ENCODE measurements at regions of chr6 and their contacts with region 1.

Region 1: GRCh38 chr6:11366183-11366933 is 133.9 kb upstream of the NEDD9 start:
- DNase-seq: peak; percentile 86
- H3K4me3 Mint-ChIP-seq: peak overlapping the region; percentile 62
- H3K27ac Mint-ChIP-seq: peak overlapping the region; percentile 86
- H3K4me1 Mint-ChIP-seq: peaks cover 78% of the 10 kb centered on the region
- H3K27me3 Mint-ChIP-seq: no peaks in the 10 kb centered on the region

Region 2: DNA sequence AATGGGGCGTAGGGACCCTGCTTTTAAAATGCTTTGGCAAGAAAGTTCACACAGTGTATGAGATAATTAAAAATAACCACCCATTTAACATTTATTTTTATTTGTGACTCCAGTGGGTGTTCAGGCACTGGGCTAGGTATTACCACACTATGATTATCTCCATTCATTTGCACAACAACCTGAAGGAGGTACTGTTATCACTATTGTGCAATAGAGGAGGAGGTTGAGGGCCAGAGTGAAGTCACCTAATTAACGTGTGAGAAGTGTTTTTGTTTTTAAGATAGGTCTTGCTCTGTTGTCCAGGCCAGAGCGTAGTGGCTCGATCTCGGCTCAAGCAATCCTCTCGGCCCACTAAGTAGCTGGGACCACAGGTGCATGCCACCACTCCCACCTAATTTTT is 557.3 kb before region 1 on chr6:
- intact Hi-C with region 1: no loop called
- DNase-seq: no peak
- H3K4me3 Mint-ChIP-seq: no peak overlapping the region
- H3K27ac Mint-ChIP-seq: no peak overlapping the region
- H3K4me1 Mint-ChIP-seq: no peaks in the 10 kb centered on the region
- H3K27me3 Mint-ChIP-seq: no peaks in the 10 kb centered on the region

Region 3: DNA sequence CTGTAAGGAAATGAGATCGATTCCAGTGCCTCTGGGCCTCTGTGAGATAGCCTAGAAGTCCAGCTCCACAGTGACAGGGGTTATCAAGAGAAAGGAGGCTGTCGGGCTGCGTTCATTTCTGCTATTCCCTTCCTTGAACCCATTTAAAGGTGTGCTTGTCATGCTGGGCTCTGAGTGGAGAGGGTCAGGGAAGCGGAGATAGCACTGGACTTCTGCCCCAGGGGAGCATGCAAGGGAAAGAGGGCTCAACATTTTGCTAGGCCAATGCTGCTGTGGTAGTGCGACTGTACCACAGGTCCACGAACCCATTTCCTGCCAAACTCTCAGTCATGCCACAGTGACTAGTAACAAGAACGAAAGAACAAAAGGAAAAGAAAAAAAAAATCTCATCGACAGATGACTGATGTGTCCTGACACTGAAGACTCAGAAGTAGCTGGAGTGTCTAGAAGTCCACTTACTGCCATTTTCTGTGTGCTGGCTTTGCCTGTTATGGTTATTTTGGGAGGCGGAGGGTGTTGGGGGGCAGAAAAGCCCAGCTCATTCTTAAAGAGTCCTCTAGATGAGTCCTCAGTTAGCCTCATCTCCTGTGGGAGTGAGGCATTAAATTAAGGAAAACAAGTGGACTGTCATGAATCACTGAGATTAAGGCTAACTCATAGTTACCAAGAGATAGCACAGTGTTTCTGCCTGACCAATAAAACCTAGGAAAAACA is 141.9 kb before region 1 on chr6:
- intact Hi-C with region 1: loop called (anchors 1 kb)
- DNase-seq: peak; percentile 87
- H3K4me3 Mint-ChIP-seq: peak overlapping the region; percentile 72
- H3K27ac Mint-ChIP-seq: peak overlapping the region; percentile 91
- H3K4me1 Mint-ChIP-seq: peaks cover 64% of the 10 kb centered on the region
- H3K27me3 Mint-ChIP-seq: no peaks in the 10 kb centered on the region

Region 4: DNA sequence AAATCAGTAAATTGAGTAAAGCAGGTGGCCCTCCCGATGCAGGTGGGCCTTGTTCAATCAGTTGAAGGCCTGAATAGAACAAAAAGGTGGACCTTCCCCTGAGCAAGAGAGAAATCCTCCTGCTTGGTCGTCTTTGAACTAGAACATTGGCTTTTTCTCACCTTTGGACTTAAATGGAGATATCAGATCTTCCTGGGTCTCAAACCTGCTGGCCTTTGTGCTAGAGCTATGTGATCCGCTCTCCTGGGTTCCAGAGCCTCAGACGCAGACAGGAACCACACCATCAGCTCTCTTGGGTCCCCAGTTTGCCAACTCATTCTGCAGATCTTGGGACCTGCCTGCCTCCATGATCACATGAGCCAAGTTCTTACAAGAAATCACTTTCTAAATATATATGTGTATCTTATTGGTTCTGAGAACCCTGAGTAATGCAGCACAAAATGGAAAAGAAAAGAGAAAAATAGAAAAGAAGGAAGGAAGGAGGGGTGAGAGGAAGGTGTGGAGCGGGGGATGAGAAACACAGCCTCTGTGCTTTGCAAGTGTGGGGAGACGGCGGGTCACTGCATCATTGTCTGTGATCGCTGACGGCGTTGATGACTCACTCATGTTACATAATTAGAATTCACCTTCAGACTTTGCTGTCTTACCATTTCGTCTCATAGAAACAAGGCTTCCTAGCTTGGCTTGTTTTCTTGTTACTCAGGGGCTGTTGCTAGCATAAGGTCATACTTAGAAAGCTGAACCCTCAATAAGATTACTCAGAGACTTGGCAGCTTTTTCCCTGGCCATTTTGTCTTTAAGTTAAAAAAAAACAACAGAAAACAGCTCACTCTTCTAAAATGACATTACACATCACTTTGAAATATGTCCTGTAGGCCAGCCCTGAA is 48.2 kb before region 1 on chr6:
- intact Hi-C with region 1: loop called (anchors 1 kb)
- DNase-seq: peak; percentile 87
- H3K4me3 Mint-ChIP-seq: peak overlapping the region; percentile 0
- H3K27ac Mint-ChIP-seq: peak overlapping the region; percentile 81
- H3K4me1 Mint-ChIP-seq: peaks cover 54% of the 10 kb centered on the region
- H3K27me3 Mint-ChIP-seq: no peaks in the 10 kb centered on the region

Region 5: GRCh38 chr6:11343963-11344747 is 22.2 kb before region 1 on chr6:
- intact Hi-C with region 1: loop called (anchors 1 kb)
- DNase-seq: no peak
- H3K4me3 Mint-ChIP-seq: peak overlapping the region; percentile 2
- H3K27ac Mint-ChIP-seq: peak overlapping the region; percentile 70
- H3K4me1 Mint-ChIP-seq: peaks cover 81% of the 10 kb centered on the region
- H3K27me3 Mint-ChIP-seq: no peaks in the 10 kb centered on the region

Region 6: DNA sequence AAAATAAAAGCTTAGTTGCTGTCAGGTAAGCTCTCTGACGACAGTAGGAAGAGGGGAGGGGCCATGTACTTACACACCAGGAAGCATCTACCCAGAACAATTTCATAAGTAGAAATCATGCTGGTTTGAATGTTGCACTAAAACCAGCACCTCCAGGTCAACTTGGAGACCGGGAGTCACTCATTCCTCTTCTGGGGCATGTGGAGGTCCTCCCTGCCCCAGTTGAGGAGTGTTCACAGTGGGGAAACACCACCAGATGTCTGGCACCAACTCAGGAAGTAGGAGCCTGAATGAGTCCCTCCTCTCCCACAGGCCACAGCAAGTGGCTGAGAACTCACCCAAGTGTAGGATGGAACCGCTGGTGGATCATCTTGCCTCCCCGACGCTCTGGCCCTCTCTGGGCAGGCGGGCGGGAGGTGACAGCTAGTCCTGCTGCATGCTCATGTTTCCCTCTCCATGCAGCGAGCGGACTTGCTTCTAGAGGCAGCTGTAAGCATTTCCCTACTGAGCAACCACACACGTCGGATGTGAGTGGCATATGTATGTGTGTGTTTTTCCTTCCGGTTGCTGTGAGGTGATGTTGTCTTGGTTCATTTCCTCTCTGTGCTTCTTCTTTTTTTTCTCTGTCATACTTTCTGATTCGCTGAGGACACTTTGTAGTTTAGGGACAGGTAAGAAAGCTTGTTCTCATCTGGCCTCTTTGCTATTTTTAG is 15.6 kb after region 1 on chr6:
- intact Hi-C with region 1: loop called (anchors 1 kb)
- DNase-seq: peak; percentile 92
- H3K4me3 Mint-ChIP-seq: peak overlapping the region; percentile 71
- H3K27ac Mint-ChIP-seq: peak overlapping the region; percentile 87
- H3K4me1 Mint-ChIP-seq: peaks cover 62% of the 10 kb centered on the region
- H3K27me3 Mint-ChIP-seq: peaks cover 1% of the 10 kb centered on the region

Region 7: DNA sequence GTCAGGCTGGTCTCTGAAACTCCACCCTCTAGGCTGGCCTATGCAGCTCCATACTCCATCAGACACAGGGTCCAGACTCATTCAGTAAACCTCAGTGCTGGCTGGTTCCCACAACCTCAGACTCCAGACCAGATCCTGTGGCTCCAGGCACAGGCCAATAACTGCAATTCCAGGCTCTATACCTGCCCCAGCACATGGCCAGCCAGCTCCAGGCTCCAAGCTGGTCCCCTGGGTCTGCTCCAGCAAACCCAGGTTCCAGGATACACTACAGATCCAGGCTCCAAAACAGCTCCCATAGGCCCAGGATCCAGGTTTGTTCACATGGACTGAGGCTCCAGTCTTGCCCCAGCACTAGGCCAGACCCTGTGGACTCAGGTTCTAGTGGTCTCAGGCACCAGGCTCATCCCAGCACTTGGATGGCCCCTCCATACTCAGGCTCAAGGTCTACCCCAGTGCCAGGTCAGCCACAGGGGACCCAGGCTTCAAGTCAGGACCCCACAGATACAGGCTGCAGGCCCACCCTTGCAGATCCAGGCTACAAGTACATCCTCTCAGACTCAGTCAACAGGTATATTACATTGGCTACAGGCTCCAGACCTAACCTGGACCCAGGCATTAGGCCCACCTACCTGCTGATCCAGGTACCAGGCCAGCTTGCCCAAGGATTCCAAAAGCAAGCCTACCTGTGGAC is 53.5 kb after region 1 on chr6:
- intact Hi-C with region 1: no loop called
- DNase-seq: no peak
- H3K4me3 Mint-ChIP-seq: no peak overlapping the region
- H3K27ac Mint-ChIP-seq: no peak overlapping the region
- H3K4me1 Mint-ChIP-seq: peaks cover 41% of the 10 kb centered on the region
- H3K27me3 Mint-ChIP-seq: no peaks in the 10 kb centered on the region

Region 8: DNA sequence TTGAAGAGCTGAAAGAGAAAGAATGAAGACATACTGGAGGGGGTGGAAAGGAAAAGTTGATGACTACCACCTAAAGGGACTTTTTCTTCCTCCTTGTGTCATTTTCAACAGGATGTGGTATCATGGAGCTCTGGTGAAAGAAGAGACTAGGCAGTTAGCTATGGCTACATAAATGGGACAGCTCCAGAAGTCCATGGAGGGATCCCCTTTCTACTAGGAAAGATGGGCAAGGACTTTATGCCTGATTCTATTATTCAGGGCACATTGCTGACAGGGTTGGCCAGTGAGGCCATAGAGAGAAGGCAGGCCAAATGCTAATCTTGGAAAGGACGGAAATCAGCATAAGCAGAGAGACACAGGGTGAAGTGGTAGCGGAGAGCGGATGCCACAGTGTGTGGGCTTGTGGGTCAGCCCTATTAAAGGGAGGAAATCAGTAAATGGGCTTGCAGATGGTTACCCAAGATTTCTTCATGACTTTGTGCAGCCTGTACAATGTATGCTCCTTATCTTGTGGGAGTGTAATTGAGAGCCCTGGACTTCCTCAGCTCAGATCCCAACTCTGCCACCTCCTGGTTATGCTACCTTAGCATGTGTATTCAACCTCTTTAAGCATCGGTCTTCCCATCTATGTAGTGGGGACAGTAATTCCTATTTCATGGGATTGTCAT is 93.8 kb after region 1 on chr6:
- intact Hi-C with region 1: loop called (anchors 1 kb)
- DNase-seq: peak; percentile 66
- H3K4me3 Mint-ChIP-seq: peak overlapping the region; percentile 78
- H3K27ac Mint-ChIP-seq: peak overlapping the region; percentile 95
- H3K4me1 Mint-ChIP-seq: peaks cover 27% of the 10 kb centered on the region
- H3K27me3 Mint-ChIP-seq: no peaks in the 10 kb centered on the region

Region 9: DNA sequence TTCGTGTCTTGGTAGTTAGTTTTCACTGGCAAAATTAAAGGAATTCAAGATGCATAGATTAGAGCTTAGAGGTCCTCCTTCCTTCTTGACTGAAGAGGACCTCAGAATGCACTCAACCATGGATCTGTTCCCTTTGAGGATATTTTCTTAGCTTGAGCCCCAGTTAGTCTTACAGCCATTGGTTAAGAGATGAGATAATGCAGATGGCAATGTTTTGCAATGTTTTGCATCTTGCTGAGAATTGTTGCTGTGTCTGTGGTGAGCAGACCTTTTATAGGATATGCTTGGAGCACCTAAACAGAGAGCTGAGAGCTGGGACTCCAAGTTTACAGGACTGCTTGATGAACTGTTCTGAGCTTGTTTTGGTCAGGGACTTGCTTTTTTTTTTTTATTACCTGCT is 278.7 kb after region 1 on chr6:
- intact Hi-C with region 1: no loop called
- DNase-seq: no peak
- H3K4me3 Mint-ChIP-seq: no peak overlapping the region
- H3K27ac Mint-ChIP-seq: no peak overlapping the region
- H3K4me1 Mint-ChIP-seq: no peaks in the 10 kb centered on the region
- H3K27me3 Mint-ChIP-seq: peaks cover 12% of the 10 kb centered on the region

Region 10: DNA sequence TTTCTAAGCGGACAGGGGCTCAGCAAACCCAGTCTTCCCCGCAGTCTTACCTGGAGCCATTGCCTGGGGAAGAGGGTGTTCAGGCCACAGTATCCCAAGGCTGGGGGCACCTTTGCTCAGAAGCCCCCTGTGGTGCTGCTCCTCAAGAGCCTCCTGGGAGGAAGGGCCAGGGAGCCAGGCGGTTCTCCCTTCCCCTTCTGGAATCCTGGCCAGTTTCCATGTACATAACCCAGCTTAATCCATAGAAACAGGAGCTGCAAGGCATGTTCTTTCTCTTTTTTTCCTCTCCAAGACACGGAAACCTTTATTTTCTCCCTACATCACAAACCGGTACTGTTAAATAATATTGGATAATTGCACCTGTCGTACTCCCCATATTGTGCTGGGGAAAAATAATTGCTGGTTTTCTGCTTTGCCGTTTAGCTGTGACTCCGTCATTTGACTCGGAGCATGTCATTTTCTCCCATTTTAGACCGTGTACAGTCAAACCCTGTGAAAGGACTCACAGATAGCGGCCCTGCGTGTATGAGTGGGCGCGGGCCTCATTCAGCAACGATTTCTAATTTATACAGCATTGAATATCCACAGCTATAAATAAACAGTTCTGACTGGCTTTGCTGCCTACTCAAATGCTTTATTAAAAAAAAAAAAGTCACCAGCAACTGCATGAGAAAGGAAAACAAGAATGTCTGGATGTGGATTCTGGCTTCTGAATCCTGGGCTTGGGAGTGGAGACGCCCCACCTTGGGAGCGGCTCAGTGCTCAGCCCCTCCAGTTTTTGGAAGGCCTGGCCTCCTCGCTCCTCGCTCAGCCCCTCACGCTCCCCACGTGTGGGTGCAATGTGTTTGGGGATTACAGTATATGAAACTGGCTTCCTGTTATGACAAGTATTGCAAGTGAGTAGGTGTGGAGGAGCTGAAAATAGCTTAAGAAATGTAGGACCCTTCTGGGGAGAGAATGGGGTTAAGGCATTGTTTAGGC is 344.9 kb after region 1 on chr6:
- intact Hi-C with region 1: loop called (anchors 5 kb)
- DNase-seq: peak; percentile 80
- H3K4me3 Mint-ChIP-seq: peak overlapping the region; percentile 83
- H3K27ac Mint-ChIP-seq: peak overlapping the region; percentile 99
- H3K4me1 Mint-ChIP-seq: peaks cover 71% of the 10 kb centered on the region
- H3K27me3 Mint-ChIP-seq: no peaks in the 10 kb centered on the region

Region 11: GRCh38 chr6:11824986-11825385 is 458.6 kb after region 1 on chr6:
- intact Hi-C with region 1: no loop called
- DNase-seq: peak; percentile 62
- H3K4me3 Mint-ChIP-seq: no peak overlapping the region
- H3K27ac Mint-ChIP-seq: peak overlapping the region; percentile 80
- H3K4me1 Mint-ChIP-seq: peaks cover 8% of the 10 kb centered on the region
- H3K27me3 Mint-ChIP-seq: no peaks in the 10 kb centered on the region

Measured in activated CD4-positive, alpha-beta T cell treated with anti-CD3 and anti-CD28 coated beads, Interleukin-2, amount 10 ng/mL, durations not matched to agents 24 days and 14 days (primary cell).